GM10248 (cell line): ENCODE measurements at regions of chr7 and their contacts with region 1.

Region 1: DNA sequence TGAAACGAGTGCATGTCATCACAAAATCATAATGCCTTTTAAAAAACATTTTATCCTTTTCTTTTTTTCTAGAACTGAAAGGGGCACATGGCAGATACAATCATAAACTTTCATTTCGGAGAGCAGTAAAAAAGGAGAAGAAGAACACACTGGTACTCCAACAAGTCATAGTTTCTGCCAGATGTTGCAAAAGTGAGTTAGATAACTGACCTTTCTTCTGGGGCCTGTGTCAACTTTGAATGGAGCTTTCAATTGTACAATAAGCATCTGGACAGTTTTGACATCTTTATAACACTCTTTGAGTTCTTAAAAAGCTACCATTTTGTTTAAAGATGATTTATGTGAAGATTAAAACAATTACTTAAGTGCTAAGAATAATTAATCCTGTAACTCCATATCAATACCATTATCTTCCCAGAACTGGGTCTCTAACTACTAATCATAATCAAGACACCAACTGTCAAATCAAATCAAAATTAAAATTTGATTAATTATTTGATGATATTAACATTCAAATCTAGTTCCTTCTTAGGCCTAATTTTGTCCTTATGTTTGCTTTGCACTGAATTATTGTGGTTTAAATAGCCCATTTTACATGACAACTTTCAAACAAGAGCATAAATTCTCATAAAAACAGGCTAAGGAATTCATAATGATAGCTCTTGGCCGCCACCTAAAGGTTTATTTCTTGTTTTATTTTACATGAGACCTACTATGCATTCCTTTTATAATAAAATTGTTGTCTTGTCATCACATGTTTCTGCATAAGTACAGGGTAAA is 19.5 kb upstream of the ITGB8 start:
- DNase-seq: no peak
- CTCF ChIP-seq: peak; percentile 24

Region 2: GRCh38 chr7:19754521-19755116 is 556.5 kb before region 1 on chr7:
- CTCF ChIA-PET with region 1: interaction called, 11 read pairs
- POLR2A ChIA-PET with region 1: no interaction called
- DNase-seq: peak; percentile 20
- CTCF ChIP-seq: peak; percentile 68

Region 3: DNA sequence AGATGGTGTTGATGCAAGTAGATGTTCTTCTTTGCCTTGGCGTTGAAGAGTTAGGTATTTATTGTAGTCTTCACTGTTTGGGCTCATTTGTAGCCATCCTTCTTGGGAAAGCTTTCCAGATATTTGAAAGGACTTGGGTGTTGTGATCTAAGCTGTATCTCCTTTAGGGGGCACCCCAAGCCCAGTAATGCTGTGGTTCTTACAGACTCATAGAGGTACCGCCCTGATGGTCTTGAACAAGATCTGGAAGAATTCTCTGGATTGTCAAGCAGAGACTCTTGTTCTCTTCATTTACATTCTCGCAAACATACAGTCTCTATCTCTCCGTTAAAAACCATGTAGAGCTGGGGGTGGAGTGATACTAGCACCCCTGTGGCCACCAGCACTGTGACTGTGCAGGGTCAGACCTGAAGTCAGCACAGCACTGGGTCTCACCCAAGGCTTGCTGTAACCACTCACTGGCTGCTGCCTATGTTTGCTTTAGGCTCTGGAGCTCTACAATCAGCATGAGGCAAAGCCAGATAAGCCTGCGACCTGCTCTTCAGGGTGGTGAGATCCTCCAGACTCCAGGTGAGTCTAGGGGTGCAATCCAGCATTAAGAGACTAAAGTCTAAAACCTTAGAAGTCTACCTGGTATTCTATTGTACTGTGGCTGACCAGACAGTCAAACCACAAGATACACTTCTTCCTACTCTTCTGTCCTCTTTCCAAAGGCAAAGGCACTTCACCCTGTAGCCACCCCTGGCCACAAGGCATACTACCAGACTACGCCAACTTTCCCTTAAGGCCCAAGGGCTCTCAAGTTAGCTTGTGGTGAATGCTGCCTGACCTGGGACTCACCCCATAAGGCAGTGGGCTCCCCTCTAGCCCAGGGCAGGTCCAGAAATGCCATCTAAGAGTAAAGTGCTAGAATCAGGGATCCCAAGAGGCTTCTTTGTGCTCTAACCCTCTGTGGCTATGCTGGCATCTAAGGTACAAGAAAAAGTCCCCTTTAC is 328.0 kb before region 1 on chr7:
- CTCF ChIA-PET with region 1: interaction called, 12 read pairs
- POLR2A ChIA-PET with region 1: no interaction called
- DNase-seq: no peak
- CTCF ChIP-seq: peak; percentile 56

Region 4: GRCh38 chr7:20158684-20159083 is 152.5 kb before region 1 on chr7:
- CTCF ChIA-PET with region 1: interaction called, 12 read pairs
- POLR2A ChIA-PET with region 1: no interaction called
- DNase-seq: no peak
- CTCF ChIP-seq: peak; percentile 47

Region 5: DNA sequence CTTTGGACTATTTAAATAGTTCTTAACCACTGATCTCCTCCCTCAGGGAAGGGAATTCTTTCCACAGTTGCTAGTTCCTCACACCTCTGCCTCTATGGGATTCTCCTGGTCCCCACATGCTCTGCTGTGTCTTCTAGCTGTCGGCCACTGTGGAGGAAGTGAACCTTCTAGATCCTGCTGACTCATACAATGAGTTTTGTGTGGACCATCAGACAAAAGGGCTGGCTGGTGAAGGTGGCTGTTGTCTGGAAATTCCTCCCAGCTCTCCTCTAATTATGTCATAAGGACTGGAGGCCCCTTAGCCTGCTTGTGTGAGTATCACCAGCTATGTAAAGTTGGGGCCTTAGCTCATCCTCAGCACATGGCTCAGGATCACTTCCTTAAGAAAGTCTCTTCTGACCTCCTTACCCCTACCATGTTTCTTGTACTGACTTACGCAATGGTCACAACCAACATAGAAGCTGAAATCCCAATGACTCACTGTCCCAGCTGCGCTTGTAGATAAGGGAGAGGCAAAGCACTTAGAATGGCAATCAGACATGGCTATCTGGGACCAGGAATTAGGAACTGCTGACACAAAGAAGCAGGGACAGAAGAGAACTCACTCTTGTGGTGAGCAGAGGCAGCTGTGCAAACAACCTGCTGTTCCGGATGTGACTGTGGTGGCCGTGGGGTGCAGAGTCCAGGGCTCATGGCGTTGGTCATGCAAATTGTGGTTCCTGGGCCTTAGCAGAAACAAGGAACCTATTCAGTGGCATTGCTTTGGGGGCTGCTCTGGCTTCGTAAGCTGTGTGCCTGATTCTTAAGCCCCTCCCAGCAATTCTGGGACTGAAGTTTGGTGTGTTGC is 91.5 kb before region 1 on chr7:
- CTCF ChIA-PET with region 1: interaction called, 12 read pairs
- POLR2A ChIA-PET with region 1: no interaction called
- DNase-seq: peak; percentile 54
- CTCF ChIP-seq: no peak

Region 6: GRCh38 chr7:20299647-20300312 is 11.4 kb before region 1 on chr7:
- CTCF ChIA-PET with region 1: interaction called, 47 read pairs
- POLR2A ChIA-PET with region 1: no interaction called
- DNase-seq: no peak
- CTCF ChIP-seq: no peak

Region 7: GRCh38 chr7:20330240-20330927 is 19.2 kb after region 1 on chr7 and contains the start of gene ITGB8:
- CTCF ChIA-PET with region 1: interaction called, 19 read pairs
- POLR2A ChIA-PET with region 1: no interaction called
- DNase-seq: peak; percentile 83
- CTCF ChIP-seq: peak; percentile 10

Region 8: GRCh38 chr7:20343205-20343604 is 32.1 kb after region 1 on chr7:
- CTCF ChIA-PET with region 1: no interaction called
- POLR2A ChIA-PET with region 1: no interaction called
- DNase-seq: no peak
- CTCF ChIP-seq: no peak